Left ventricle myocardium superior (tissue), 1 donor: ENCODE measurements at regions of chr5 and their contacts with region 1.

Region 1: GRCh38 chr5:148805326-148806290 is 20.8 kb upstream of the ADRB2 start:
- DNase-seq: peak; percentile 75
- ATAC-seq: peak; percentile 97

Region 2: DNA sequence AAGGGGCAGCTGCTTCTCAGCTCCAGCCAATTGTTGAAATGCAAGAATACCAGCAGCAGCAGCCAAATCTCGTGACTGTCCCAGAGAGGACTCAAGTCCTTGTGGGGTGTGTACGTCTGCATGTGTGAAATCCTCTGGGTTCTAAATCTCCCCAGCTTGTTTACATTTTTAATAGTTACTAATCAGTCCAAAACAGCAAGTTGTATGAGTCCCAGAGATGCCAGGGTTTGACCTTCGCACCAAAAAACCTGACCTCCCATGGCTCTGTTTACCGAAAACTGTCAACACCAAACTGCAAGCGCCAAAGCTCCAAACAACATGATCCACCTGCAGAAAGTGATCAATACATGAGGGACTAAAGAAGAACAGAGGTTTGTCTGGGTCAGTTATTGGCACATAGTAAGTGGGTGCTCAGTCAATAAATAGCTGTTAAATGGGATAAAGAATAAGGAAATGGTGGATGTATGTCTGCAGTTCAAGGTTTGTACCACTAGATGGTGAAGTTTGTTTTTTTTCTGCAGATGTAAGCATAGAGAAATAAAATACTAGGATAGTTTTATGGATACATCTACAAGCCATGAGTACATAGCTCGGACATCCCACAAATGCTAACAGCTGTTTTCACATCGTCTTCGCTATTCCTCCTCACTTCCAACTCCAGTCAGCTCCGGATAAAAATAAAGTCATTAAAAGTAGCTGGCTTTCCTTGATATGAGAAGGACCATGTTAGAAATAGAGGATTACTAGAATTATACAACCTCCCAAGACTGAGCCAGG is 64.5 kb before region 1 on chr5:
- intact Hi-C with region 1: loop called (anchors 10 kb)
- DNase-seq: no peak
- ATAC-seq: peak; percentile 80